Gastrocnemius medialis (tissue), 4 donors: ENCODE measurements at regions of chr9 and their contacts with region 1.

Region 1: DNA sequence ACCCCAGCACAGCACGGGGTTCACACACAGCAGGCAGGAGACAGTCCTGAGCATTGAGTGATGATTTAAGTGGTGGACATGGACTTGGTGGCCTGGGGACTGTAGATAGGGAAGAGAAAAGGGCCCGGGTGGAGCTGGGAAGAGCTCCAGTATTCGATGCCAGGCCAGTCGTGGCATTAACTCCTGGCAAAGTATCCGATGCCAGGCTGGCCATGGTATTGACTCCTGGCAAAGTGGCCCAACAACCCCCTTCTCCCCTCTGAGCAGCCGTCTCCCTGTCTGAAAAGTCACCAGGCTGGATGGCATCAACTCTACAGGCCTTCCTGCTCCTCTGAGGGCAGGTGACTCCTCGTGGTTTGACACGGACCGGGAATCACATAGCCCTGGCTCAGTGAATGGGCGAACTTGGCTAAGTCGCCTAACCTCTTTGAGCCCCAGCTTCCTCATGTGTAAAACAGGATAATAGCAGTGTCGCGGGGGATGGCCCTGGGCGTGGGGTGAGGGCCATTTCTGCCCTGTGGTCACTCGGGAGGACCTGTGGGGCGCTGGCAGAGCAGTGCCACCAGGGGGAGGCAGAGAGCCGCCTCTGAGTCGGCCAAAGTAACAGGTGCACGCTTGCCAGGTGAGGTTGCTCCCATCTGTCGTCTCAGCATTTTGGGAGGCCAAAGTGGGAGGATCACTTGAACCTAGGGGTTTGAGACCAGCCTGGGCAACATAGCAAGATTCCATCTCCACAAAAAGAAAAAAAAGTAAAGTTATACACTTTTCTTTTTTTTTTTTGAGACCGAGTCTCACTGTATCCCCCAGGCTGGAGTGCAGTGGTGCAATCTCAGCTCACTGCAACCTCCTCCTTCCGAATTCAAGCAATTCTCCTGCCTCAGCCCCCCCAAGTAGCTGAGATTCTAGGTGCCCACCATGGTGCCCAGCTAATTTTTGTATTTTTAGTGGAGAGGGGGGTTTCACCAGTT is 5.7 kb upstream of the SEC16A start:
- DNase-seq: peak; percentile 33 to 67
- ATAC-seq: peak; percentile 57 to 58
- H3K4me3 ChIP-seq: no peak overlapping the region
- H3K27ac ChIP-seq: no peak overlapping the region
- H3K4me1 ChIP-seq: peaks cover 11 to 12% of the 10 kb centered on the region in 2 donors
- H3K27me3 ChIP-seq: no peaks in the 10 kb centered on the region
- CTCF ChIP-seq: peak; percentile 97 to 98 (median 98)
- POLR2A ChIP-seq: no peak

Region 2: GRCh38 chr9:136605988-136606660 is 117.6 kb after region 1 on chr9:
- in situ Hi-C with region 1: no loop called
- intact Hi-C with region 1: no loop called
- DNase-seq: no peak
- ATAC-seq: no peak
- H3K4me3 ChIP-seq: no peak overlapping the region
- H3K27ac ChIP-seq: no peak overlapping the region
- H3K4me1 ChIP-seq: no peaks in the 10 kb centered on the region
- H3K27me3 ChIP-seq: peaks cover 0 to 4% (median 0%) of the 10 kb centered on the region in 3 donors
- CTCF ChIP-seq: no peak
- POLR2A ChIP-seq: no peak

Region 3: DNA sequence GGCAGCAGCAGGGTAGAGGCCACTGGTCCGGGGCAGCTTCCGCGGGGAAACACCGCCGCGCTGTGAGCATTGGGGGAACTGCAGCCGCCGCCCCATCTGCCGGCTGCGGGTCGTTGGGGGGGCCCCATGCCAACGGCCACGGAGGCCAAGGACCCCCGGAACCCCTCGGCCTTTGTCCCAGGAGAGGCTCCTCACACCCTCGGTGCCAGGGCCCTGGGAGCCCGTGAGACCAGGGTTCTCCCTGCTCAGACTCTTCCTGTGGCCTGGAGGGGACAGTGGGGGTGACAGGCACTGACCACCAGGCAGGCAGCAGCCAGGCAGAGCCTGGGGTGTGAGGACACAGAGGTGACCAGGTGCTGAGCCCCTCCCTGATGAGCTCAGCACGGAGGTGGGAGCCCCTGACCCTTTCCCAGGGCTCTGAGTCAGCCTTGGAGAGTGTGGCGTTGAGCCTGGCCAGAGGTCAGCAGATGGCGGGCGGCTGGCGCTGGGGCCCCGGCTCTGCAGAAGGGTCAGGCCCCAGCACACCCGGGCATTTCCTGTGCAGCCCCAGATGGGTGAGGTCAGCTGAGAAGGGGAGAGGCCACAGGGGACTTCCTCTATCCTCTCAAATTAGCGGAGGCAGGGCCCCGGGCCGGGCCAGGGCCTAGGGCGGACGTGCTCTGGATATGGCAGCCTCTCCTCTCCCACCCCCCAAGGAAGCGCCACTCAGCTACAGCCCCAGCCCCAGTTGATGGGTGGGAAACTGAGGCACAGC is 156.2 kb after region 1 on chr9:
- in situ Hi-C with region 1: loop called in 2 of 4 experiments (anchors 5 to 25 kb)
- intact Hi-C with region 1: loop called (anchors 1 kb)
- DNase-seq: peak; percentile 55 to 56
- ATAC-seq: peak; percentile 50 to 59
- H3K4me3 ChIP-seq: peak overlapping the region; percentile 37 to 57 (median 48)
- H3K27ac ChIP-seq: peak overlapping the region; percentile 34 to 81 (median 78)
- H3K4me1 ChIP-seq: peaks cover 0 to 9% of the 10 kb centered on the region in 2 donors
- H3K27me3 ChIP-seq: peaks cover 0 to 4% (median 0%) of the 10 kb centered on the region in 3 donors
- CTCF ChIP-seq: peak; percentile 77 to 93 (median 85)
- POLR2A ChIP-seq: peak; percentile 19 to 36